ENCODE measurements at regions of chr5 and their contacts with region 1.

Region 1: DNA sequence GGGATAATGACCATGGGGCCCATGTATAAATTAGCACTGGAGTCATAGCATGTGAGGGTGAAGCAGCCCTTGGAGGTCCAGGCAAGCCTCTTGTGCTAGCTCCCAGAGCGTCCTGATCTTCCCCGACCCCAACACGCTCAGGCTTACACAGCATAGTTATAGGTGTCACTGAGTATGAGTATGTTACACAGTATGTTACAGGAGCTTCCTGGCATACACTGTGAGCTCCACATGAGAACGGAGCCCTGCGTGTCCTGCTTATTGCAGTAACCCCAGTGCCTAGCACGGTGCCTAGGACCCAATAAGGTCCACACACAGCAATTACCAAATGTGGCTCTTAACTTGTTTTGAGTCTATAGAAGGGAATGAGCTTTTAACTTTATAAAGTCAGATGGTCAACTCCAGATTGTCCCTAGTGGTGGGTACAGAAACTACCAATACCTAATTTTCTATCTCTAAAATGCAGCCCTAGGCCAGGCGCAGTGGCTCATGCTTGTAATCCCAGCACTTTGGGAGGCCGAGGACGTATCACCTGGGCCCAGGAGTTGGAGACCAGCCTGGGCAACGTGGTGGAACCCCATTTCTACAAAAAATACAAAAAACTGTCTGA is 64.1 kb downstream of the PLAC8L1 start:
- DNase-seq: no peak
- ATAC-seq: peak; percentile 90
- H3K4me3 Mint-ChIP-seq: no peak overlapping the region
- H3K27ac Mint-ChIP-seq: no peak overlapping the region
- H3K4me1 Mint-ChIP-seq: peaks cover 6% of the 10 kb centered on the region
- H3K27me3 Mint-ChIP-seq: no peaks in the 10 kb centered on the region
- CTCF ChIP-seq: no peak

Region 2: DNA sequence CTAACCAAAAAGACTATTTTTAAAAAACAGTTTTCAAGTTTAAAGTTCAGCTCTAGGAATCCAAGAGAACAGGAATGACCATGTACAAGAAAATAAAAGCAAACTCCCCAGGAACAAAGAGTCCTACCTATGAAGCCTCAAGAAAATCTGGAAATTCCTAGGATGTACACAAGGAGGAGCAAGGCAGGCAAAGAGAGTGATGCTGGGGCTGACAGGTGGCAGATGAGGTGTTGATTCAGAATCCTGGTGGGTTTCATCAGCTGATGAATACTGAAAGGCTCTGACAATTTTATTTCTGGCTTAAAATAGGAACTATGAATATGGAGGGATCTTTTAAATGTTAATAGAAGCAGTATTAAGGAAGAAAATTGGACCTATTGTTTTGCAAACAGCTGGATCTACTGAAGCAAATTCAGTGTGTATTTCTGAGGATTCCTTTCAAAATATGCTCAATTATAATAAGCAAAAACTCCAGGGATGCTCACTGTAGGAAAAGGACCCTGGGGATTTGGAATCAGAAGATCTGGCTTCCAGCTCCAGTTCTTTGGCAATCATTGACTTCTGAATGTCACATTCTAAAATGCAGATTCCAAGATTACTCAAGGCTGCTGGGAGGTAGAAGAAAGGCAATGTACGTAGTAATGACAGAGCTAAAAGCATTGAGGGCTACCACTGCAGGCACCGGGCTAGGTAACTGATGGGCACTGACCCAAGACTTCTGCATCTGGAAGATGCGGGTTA is 132.9 kb before region 1 on chr5:
- CTCF ChIA-PET with region 1: interaction called, 11 read pairs
- POLR2A ChIA-PET with region 1: no interaction called
- DNase-seq: no peak
- ATAC-seq: peak; percentile 74
- H3K4me3 Mint-ChIP-seq: no peak overlapping the region
- H3K27ac Mint-ChIP-seq: no peak overlapping the region
- H3K4me1 Mint-ChIP-seq: peaks cover 4% of the 10 kb centered on the region
- H3K27me3 Mint-ChIP-seq: no peaks in the 10 kb centered on the region; the same call in 1 of the 2 replicates
- CTCF ChIP-seq: no peak

Region 3: GRCh38 chr5:146027751-146028150 is 13.5 kb before region 1 on chr5:
- CTCF ChIA-PET with region 1: interaction called, 29 read pairs
- POLR2A ChIA-PET with region 1: no interaction called
- DNase-seq: no peak
- ATAC-seq: peak; percentile 8; the same call in 1 of the 2 replicates
- H3K4me3 Mint-ChIP-seq: no peak overlapping the region
- H3K27ac Mint-ChIP-seq: no peak overlapping the region
- H3K4me1 Mint-ChIP-seq: peaks cover 44% of the 10 kb centered on the region
- H3K27me3 Mint-ChIP-seq: no peaks in the 10 kb centered on the region; the same call in 1 of the 2 replicates
- CTCF ChIP-seq: no peak

Region 4: GRCh38 chr5:146059460-146060220 is 18.4 kb after region 1 on chr5:
- CTCF ChIA-PET with region 1: no interaction called
- POLR2A ChIA-PET with region 1: no interaction called
- DNase-seq: no peak
- ATAC-seq: no peak
- H3K4me3 Mint-ChIP-seq: no peak overlapping the region
- H3K27ac Mint-ChIP-seq: no peak overlapping the region
- H3K4me1 Mint-ChIP-seq: no peaks in the 10 kb centered on the region
- H3K27me3 Mint-ChIP-seq: no peaks in the 10 kb centered on the region; the same call in none of the 2 replicates
- CTCF ChIP-seq: no peak